Heart right ventricle (tissue), 16 donors: ENCODE measurements at regions of chr18 and their contacts with region 1.

Region 1: GRCh38 chr18:24397694-24398365 is at the start of gene OSBPL1A:
- DNase-seq: peak; percentile 94 to 96
- ATAC-seq: peak; percentile 97 to 99 (median 98)
- H3K4me3 ChIP-seq: peak within 1 kb of the TSS; percentile 61 to 84 (median 76)
- H3K27ac ChIP-seq: peak within 1 kb of the TSS in 9 of 10 donors; percentile 66 to 89 (median 80)
- H3K4me1 ChIP-seq: peaks cover 0 to 36% (median 9%) of the 10 kb centered on the region in 9 donors
- H3K27me3 ChIP-seq: no peaks in the 10 kb centered on the region
- CTCF ChIP-seq: peak in 3 of 9 donors; percentile 11 to 30 (median 22)
- total RNA-seq, gene OSBPL1A: 50.9 to 85.6 (median 64.8) TPM

Region 2: DNA sequence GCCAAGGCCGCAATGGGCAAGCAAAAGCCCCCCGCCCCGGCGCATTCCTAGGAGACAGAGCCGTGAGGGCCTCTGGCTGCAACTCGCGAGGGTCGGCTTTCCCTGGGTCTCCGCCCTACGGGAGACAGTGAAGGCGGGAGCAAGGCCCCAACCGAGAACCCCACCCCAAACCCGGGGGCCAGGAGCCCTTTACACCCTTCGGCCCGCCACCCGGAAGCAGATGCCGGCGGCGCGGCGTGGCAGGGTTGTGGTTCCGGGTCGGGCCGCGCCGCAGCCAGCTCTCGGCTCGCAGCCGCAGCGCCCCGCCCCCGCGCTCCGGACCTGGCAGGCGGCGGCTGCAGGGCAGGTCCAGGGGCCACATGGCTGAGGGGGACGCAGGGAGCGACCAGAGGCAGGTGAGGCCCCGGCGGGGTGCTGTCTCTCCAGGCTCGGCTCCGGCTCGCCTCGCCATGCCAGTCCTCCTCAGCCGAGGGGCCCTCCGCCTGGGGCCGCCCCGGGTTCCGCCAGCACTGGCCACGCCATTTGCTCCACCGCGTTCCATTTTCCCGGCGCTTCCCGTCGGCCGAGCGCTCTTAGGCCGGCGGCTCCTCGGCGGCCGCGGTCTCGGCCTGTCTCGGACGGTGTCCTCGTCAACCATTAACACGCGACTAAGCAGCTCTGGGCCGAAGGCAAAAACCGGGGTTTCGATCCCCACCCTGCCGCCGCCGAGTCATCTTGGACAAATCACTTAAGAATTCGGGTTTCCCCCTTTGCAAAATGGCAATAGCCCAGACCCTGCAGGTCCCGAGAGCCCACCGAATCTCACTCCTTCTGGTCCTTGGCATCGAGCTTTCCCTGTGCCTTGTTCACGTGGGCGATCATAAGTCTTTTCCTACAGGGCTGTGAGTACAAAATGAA is 28.8 kb after region 1 on chr18 and contains the start of gene IMPACT:
- intact Hi-C with region 1: loop called in 1 of 10 experiments (anchors 1 kb)
- DNase-seq: peak; percentile 81 to 88
- ATAC-seq: peak; percentile 97 to 99 (median 98)
- H3K4me3 ChIP-seq: peak within 1 kb of the TSS; percentile 71 to 98 (median 80)
- H3K27ac ChIP-seq: peak within 1 kb of the TSS; percentile 68 to 90 (median 84)
- H3K4me1 ChIP-seq: peaks cover 0 to 27% (median 14%) of the 10 kb centered on the region in 9 donors
- H3K27me3 ChIP-seq: peaks cover 0 to 38% (median 24%) of the 10 kb centered on the region in 7 donors
- CTCF ChIP-seq: no peak
- total RNA-seq, gene IMPACT: 19.2 to 33.8 (median 26.9) TPM